ENCODE measurements at regions of chr17 and their contacts with region 1.

Region 1: DNA sequence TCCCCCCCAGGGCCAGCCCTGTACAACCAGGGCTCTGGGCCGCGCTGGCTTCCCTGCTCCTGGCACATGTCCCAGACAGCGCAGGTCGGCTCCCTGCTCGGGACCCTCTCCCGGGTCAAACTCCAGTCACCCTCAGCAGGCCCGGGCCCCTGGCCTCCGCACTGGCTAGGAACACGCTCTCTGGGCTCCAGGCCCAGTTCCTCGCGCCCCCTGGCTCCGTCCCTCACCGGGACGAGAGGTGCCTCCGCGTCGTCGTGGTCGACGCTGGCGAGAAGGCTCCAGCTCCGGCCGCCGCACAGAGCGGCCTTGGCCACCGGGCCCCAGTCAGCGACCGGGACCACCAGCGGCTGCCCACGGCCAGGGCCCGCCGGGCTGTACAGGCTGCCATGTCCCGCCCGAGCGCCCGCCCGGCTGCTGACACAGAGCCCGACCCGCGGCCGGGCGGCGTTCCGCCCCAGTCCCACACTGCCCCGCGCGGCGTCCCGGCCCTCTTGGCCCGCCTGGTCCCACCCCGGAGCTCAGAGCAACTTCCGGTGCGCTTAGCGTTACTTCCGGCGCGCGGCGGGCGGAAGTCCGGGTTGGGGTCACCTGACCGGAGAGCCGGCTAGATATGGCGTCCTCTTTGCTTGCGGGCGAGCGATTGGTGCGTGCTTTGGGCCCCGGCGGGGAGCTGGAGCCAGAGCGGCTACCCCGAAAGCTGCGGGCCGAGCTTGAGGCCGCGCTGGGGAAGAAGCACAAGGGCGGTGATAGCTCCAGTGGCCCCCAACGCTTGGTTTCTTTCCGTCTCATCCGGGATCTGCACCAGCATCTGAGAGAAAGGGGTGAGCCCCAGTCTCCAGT is at the start of gene POLDIP2:
- DNase-seq: peak; percentile 90 to 96
- H3K4me3 ChIP-seq: peak within 1 kb of the TSS; percentile 90
- H3K4me1 ChIP-seq: peaks cover 17% of the 10 kb centered on the region
- H3K27me3 ChIP-seq: no peaks in the 10 kb centered on the region

Region 2: DNA sequence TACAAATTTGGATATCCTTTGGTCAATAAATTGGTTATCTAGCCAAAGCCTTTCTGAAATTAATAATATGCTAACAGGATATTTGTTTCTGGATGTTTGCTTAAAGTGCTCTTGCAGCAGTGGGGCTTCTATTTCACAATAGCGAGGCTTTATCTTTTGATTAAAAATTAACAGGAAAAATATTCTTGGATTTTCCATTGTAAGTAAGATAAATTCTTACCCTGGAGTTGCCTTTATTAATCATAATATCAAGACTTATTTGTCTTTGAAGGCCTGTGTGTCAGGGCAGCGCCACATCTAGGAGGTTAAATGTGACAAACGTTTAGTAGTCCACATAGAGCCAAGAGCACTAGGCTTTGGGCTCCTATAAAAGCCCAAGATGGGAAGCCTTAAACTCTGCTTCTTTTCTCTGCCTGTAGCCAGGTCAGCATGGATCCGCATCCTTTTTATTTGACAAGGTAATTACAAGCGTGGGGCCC is 33.0 kb before region 1 on chr17:
- in situ Hi-C with region 1: loop called (anchors 5 kb)
- DNase-seq: no peak
- H3K4me3 ChIP-seq: no peak overlapping the region
- H3K4me1 ChIP-seq: peaks cover 18% of the 10 kb centered on the region
- H3K27me3 ChIP-seq: no peaks in the 10 kb centered on the region

Measured in HAP-1 (cell line).